Right ventricle myocardium inferior (tissue), 1 donor: ENCODE measurements at regions of chr22 and their contacts with region 1.

Region 1: GRCh38 chr22:50620593-50621355 is 7.2 kb downstream of the ARSA start:
- DNase-seq: peak; percentile 81
- ATAC-seq: peak; percentile 79

Region 2: GRCh38 chr22:50525390-50526068 is 95.2 kb before region 1 on chr22 and contains the start of gene SCO2:
- intact Hi-C with region 1: loop called (anchors 5 kb)
- DNase-seq: peak; percentile 99
- ATAC-seq: peak; percentile 66
- total RNA-seq, gene SCO2: not detected

Region 3: GRCh38 chr22:50544078-50544745 is 76.6 kb before region 1 on chr22:
- intact Hi-C with region 1: loop called (anchors 5 kb)
- DNase-seq: peak; percentile 91
- ATAC-seq: peak; percentile 66

Region 4: GRCh38 chr22:50576070-50576469 is 44.7 kb before region 1 on chr22:
- intact Hi-C with region 1: loop called (anchors 2 kb)
- DNase-seq: no peak
- ATAC-seq: no peak

Region 5: DNA sequence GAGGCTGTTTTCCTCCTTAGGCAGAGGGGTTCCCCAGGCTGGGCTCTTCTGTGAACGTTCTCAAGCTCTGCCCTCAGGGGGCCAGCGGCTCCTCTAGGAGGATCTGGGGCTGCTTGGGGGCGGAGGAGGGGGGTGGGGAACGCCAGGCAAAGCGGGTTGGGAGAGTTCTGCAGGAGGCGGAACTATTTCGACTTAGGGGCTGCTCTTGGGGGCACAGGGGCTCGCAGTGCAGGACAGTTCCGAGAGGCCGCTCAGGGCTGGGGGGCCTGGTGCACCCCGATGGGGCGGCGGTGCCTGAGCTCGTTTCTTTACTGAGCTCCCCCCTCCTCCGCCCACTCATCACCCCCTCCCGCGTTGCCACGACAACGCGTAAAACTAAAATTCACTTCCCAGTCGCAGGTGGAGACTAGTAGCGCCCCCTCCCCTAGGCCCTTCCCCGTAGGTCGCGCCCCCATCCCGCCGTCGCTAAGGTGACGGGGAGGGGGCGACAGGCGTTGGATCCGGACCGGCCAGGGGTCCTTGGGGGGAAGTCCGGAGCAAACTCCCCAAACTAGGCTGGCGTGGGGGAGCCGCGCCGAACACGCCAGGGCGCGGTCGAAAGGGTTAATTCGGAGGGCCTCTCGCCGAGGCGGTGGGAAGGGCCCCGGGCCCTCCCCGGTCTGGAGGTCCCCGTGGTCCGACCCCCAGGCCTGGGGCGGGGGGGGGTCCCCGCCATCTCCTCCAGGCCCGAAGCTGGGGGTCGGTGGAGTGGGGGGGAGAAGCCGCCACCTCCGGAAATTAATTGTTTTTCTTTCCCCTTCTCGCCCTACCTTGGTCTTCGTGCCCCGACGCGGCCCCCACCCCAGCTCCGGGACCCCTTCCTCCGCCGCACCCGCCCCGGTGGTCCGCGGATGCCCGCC is 52.7 kb after region 1 on chr22:
- intact Hi-C with region 1: loop called (anchors 2 kb)
- DNase-seq: no peak
- ATAC-seq: no peak

Region 6: DNA sequence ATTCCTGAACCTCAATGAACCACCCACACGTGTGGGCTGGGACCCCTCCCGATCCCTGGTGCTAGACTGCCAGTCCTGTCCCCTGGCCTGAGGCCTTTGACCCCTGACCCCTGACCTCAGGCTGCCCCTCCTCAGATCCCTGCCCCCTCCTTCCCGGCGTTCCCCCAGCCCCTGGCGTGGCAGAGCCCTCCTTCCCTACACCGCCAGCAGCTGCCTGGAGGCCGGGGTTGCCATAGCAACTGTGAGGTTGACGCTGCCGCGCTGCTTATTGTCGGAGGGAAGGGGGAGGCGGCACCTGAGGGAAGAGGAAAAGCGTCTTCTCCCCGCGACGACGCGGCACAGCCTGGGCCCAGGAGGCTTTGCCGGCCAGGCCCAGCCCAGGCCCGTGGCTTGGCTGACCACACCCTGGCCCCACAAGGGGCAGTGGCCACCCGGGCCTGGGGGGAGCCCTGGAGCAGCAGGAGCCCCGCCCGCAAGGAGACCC is 84.5 kb after region 1 on chr22:
- intact Hi-C with region 1: no loop called
- DNase-seq: peak; percentile 61
- ATAC-seq: peak; percentile 35